ENCODE measurements at regions of chr5 and their contacts with region 1.

Region 1: DNA sequence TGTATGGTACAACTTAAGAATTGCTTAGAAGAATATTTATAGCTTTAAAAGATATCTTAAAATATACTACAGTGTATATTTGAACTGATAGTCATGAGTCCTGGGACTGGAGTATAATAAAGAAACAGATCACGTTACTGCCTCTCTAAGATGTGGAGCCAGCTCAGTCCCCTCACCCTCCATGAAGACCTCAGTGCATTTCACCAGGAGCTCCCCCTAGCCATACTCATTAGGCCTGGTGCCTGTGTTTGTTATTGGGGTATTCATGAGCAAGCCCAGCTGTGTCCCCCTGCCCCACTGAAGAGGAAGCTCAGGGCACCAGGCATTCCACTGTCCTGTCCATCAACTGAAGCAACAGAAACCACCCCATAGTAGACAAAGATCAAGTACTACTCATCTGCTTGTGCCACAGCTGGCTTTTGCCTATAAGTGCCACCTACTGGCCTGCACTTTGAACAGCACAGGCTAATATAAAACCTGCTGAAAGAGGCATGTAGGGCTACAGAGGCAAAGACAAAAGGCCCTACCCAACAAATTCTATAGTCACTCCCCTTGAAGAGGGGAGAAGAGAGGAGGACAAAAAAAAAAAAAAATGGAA is 850.2 kb upstream of the NUDT12 start:
- DNase-seq: peak; percentile 58
- H3K4me3 Mint-ChIP-seq: no peak overlapping the region
- H3K27ac Mint-ChIP-seq: no peak overlapping the region
- H3K4me1 Mint-ChIP-seq: no peaks in the 10 kb centered on the region
- H3K27me3 Mint-ChIP-seq: peaks cover 20% of the 10 kb centered on the region
- CTCF ChIP-seq: peak; percentile 64

Region 2: DNA sequence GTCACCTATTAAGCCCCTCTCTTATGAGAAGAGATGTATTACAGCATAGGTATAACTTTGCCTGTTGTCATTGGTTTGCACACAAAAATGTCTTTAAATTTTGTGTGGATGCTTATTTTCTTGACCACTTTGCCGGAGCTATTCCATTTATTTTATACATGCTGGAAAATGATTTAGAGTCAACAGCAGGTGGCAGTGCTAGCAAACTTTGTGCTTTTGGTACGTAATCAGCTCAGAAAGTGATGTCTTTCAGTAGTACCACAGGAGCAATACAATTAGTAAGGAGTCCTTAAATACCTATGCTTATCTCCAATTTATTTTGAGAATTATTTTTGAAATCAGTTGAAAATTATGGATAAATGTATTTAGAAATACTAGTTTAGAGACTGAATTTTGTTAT is 830.4 kb before region 1 on chr5:
- CTCF ChIA-PET with region 1: interaction called, 6 read pairs
- POLR2A ChIA-PET with region 1: no interaction called
- intact Hi-C with region 1: loop called (anchors 2 kb)
- DNase-seq: peak; percentile 63
- H3K4me3 Mint-ChIP-seq: no peak overlapping the region
- H3K27ac Mint-ChIP-seq: no peak overlapping the region
- H3K4me1 Mint-ChIP-seq: no peaks in the 10 kb centered on the region
- H3K27me3 Mint-ChIP-seq: peaks cover 29% of the 10 kb centered on the region
- CTCF ChIP-seq: peak; percentile 38

Region 3: DNA sequence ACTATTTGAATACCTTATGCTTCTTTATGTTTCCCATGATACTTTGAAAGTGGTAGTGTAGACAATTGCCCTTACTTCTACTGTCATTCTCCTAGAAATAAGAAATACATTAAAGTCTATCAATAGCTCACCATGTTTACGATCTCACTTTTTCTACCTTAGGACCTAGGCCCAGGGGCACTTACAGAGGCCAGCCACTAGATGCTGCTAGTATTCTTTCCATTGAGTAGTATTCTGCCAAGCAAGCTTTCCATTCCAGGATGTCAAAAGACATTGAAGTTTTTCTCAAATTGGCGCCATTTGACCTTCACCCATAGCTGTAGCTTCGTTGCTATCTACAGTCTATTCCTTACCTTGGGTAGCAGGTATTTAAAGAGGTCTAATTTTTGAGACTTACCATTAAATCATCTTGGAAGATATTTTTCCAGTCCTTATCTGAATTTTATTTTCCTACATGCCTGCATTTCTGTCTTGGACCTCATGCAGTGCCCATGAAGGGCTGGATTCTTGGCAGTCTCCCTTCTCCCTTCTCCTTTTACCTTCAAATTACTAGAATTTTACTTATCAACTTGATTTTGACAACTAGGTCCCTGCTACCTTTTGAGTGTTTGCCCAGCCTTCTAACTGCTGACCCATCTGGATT is 604.2 kb before region 1 on chr5:
- CTCF ChIA-PET with region 1: interaction called, 32 read pairs
- POLR2A ChIA-PET with region 1: no interaction called
- intact Hi-C with region 1: loop called (anchors 1 kb)
- DNase-seq: peak; percentile 57
- H3K4me3 Mint-ChIP-seq: no peak overlapping the region
- H3K27ac Mint-ChIP-seq: no peak overlapping the region
- H3K4me1 Mint-ChIP-seq: no peaks in the 10 kb centered on the region
- H3K27me3 Mint-ChIP-seq: no peaks in the 10 kb centered on the region
- CTCF ChIP-seq: peak; percentile 88

Region 4: GRCh38 chr5:103942587-103943186 is 470.1 kb before region 1 on chr5:
- CTCF ChIA-PET with region 1: interaction called, 10 read pairs
- POLR2A ChIA-PET with region 1: no interaction called
- intact Hi-C with region 1: loop called (anchors 1 kb)
- DNase-seq: peak; percentile 1
- H3K4me3 Mint-ChIP-seq: no peak overlapping the region
- H3K27ac Mint-ChIP-seq: no peak overlapping the region
- H3K4me1 Mint-ChIP-seq: no peaks in the 10 kb centered on the region
- H3K27me3 Mint-ChIP-seq: no peaks in the 10 kb centered on the region
- CTCF ChIP-seq: no peak

Region 5: GRCh38 chr5:104347119-104347708 is 65.5 kb before region 1 on chr5:
- CTCF ChIA-PET with region 1: interaction called, 6 read pairs
- POLR2A ChIA-PET with region 1: no interaction called
- intact Hi-C with region 1: loop called (anchors 5 kb)
- DNase-seq: peak; percentile 57
- H3K4me3 Mint-ChIP-seq: no peak overlapping the region
- H3K27ac Mint-ChIP-seq: no peak overlapping the region
- H3K4me1 Mint-ChIP-seq: peaks cover 15% of the 10 kb centered on the region
- H3K27me3 Mint-ChIP-seq: no peaks in the 10 kb centered on the region
- CTCF ChIP-seq: peak; percentile 38

Region 6: DNA sequence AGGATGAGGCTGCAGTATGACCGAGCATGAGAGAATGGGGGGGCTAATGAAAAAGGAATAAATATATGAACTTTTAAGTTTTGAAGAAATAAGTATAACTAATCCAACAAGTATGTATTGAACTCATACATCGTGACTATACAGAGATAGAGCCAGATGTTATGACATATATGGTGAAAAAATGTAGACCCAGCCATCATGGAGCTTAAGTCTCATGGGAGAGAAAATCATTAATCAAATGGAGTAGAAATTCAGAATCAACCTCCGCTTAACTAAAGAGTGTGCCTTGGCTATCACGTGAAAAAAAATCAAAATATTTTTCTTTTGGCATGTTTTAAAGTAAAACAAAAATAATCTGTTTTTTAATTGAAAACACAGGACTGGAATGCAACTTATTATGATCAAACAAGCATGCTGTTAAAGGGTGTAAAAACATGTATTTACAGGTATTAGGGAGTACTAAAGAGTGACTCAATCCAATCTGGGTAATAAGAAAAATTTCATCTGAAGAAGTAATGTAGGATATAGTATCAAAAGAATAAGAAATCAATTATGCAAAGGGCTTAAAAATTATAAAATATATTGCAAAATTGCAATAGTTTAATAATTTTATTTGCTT is 18.4 kb after region 1 on chr5:
- CTCF ChIA-PET with region 1: interaction called, 16 read pairs
- POLR2A ChIA-PET with region 1: no interaction called
- intact Hi-C with region 1: no loop called
- DNase-seq: no peak
- H3K4me3 Mint-ChIP-seq: no peak overlapping the region
- H3K27ac Mint-ChIP-seq: no peak overlapping the region
- H3K4me1 Mint-ChIP-seq: no peaks in the 10 kb centered on the region
- H3K27me3 Mint-ChIP-seq: no peaks in the 10 kb centered on the region
- CTCF ChIP-seq: no peak

Region 7: DNA sequence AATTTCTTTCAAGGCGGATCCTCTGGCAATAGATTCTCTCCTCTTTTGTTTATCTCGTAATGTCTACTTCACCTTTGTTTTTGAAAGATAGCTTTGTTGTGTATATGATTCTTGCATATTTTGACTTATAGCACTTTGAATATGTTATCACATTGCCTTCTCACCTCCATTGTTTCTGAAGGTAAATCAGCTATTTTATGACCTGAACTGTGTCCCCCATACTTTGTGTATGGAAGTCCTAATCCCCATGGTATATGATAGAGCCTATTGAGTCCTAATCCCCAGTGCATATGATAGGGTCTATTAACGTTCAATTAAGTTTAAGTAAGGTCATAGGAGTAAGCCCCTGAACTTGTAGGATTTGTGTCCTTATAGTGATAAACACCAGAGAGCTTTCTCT is 60.1 kb after region 1 on chr5:
- CTCF ChIA-PET with region 1: no interaction called
- POLR2A ChIA-PET with region 1: no interaction called
- intact Hi-C with region 1: no loop called
- DNase-seq: no peak
- H3K4me3 Mint-ChIP-seq: no peak overlapping the region
- H3K27ac Mint-ChIP-seq: no peak overlapping the region
- H3K4me1 Mint-ChIP-seq: no peaks in the 10 kb centered on the region
- H3K27me3 Mint-ChIP-seq: no peaks in the 10 kb centered on the region
- CTCF ChIP-seq: no peak